ENCODE measurements at regions of chr18 and their contacts with region 1.

Region 1: GRCh38 chr18:21111341-21112139 is at the start of gene ROCK1:
- DNase-seq: peak; percentile 96
- H3K4me3 ChIP-seq: peak within 1 kb of the TSS; percentile 98
- H3K27ac ChIP-seq: peak within 1 kb of the TSS; percentile 90
- H3K4me1 ChIP-seq: peaks cover 12% of the 10 kb centered on the region
- H3K27me3 ChIP-seq: no peaks in the 10 kb centered on the region
- CTCF ChIP-seq: no peak
- total RNA-seq, gene ROCK1: 34.9 and 38.1 TPM in 2 replicates

Region 2: GRCh38 chr18:20971886-20972267 is 139.7 kb before region 1 on chr18:
- CTCF ChIA-PET with region 1: no interaction called
- POLR2A ChIA-PET with region 1: no interaction called
- intact Hi-C with region 1: loop called (anchors 5 kb)
- DNase-seq: peak; percentile 61
- H3K4me3 ChIP-seq: no peak overlapping the region
- H3K27ac ChIP-seq: no peak overlapping the region
- H3K4me1 ChIP-seq: no peaks in the 10 kb centered on the region
- H3K27me3 ChIP-seq: no peaks in the 10 kb centered on the region
- CTCF ChIP-seq: peak; percentile 66

Region 3: DNA sequence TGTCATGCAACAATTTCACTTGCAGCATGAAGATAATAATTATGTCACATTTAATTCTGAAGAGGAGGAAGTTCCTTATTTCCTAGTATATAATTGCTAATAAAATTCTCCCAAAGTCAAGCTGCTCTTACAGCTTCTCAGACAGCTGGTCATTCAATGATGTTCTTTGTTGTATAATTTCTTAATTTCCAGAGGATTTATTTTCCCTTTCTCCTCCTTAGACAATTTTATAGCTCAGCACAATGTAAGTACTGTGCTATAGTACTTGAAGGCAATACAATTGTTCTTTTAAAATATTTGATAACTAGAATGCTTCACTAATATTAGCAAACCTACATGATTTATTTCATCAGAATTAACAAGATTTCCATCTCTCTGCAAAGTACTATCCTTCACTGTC is 73.3 kb before region 1 on chr18:
- CTCF ChIA-PET with region 1: no interaction called
- POLR2A ChIA-PET with region 1: no interaction called
- intact Hi-C with region 1: loop called (anchors 5 kb)
- DNase-seq: peak; percentile 50
- H3K4me3 ChIP-seq: no peak overlapping the region
- H3K27ac ChIP-seq: no peak overlapping the region
- H3K4me1 ChIP-seq: peaks cover 9% of the 10 kb centered on the region
- H3K27me3 ChIP-seq: no peaks in the 10 kb centered on the region
- CTCF ChIP-seq: no peak

Region 4: GRCh38 chr18:21090680-21091079 is 20.9 kb before region 1 on chr18:
- CTCF ChIA-PET with region 1: no interaction called
- POLR2A ChIA-PET with region 1: interaction called, 11 read pairs
- intact Hi-C with region 1: no loop called
- DNase-seq: no peak
- H3K4me3 ChIP-seq: no peak overlapping the region
- H3K27ac ChIP-seq: no peak overlapping the region
- H3K4me1 ChIP-seq: no peaks in the 10 kb centered on the region
- H3K27me3 ChIP-seq: no peaks in the 10 kb centered on the region
- CTCF ChIP-seq: no peak

Region 5: DNA sequence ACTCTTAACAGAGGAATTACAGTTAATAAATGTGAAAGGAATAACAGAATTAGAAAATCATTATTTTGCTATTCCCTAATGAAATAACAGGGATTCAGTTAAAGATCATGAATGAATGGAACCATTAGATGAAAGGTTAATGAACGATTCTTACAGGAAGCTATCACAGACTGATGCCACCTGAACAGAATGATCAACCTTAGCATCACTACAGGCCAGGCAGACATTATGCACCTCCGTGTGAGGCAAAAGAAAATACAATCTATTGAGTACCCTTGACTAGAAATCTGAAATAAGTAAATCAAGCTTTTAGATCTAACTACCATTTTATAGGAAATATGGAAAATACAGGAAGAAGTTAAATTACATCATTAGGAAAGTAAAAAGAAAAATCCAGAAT is 10.4 kb before region 1 on chr18:
- CTCF ChIA-PET with region 1: no interaction called
- POLR2A ChIA-PET with region 1: no interaction called
- intact Hi-C with region 1: no loop called
- DNase-seq: no peak
- H3K4me3 ChIP-seq: no peak overlapping the region
- H3K27ac ChIP-seq: no peak overlapping the region
- H3K4me1 ChIP-seq: no peaks in the 10 kb centered on the region
- H3K27me3 ChIP-seq: no peaks in the 10 kb centered on the region
- CTCF ChIP-seq: no peak

Region 6: DNA sequence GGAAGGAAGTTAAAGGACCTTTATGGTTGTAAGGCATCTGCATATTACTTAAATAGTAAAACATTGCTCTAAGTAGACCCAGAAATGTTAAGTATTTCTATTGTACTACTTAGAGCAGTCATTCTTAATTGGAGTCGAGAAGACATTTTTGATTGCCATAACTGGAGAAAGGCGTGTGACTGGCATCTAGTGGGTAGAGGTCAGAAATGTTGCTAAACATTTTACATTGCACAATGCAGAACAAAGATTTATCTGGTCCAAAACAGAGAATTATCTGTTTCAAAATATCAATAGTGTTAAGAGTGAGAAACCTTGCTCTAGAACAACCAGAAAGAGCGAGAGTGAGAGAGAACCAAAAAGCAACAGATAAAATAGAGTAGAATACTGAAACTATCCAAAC is 23.4 kb after region 1 on chr18:
- CTCF ChIA-PET with region 1: no interaction called
- POLR2A ChIA-PET with region 1: no interaction called
- intact Hi-C with region 1: no loop called
- DNase-seq: peak; percentile 31
- H3K4me3 ChIP-seq: no peak overlapping the region
- H3K27ac ChIP-seq: no peak overlapping the region
- H3K4me1 ChIP-seq: no peaks in the 10 kb centered on the region
- H3K27me3 ChIP-seq: no peaks in the 10 kb centered on the region
- CTCF ChIP-seq: peak; percentile 47